A549 (cell line): ENCODE measurements at regions of chr15 and their contacts with region 1.

Region 1: DNA sequence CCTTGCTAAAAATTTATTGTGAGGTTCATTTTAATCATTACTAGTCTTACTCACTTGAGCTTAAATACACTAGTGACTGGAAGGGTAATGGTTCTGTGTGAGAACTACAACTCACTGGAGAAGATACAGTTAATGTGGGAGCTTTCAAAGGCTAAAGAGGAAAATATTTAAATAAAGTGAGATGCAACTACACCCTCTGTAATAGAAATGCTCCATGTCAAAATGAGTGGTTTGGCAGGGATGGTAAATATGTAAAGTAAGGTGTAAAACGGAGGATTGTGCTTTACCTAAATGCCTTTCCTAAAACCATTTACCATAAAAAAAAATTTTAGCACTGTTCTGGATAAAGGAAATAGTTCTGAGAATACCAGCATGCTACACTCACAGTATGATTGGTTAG is 15.3 kb downstream of the LRRC57 start:
- DNase-seq: no peak
- ATAC-seq: no peak
- H3K4me3 ChIP-seq: no peak overlapping the region
- H3K27ac ChIP-seq: no peak overlapping the region
- H3K4me1 ChIP-seq: no peaks in the 10 kb centered on the region
- CTCF ChIP-seq: no peak
- EP300 ChIP-seq: no peak
- POLR2A ChIP-seq: no peak
- RAD21 ChIP-seq: no peak

Region 2: DNA sequence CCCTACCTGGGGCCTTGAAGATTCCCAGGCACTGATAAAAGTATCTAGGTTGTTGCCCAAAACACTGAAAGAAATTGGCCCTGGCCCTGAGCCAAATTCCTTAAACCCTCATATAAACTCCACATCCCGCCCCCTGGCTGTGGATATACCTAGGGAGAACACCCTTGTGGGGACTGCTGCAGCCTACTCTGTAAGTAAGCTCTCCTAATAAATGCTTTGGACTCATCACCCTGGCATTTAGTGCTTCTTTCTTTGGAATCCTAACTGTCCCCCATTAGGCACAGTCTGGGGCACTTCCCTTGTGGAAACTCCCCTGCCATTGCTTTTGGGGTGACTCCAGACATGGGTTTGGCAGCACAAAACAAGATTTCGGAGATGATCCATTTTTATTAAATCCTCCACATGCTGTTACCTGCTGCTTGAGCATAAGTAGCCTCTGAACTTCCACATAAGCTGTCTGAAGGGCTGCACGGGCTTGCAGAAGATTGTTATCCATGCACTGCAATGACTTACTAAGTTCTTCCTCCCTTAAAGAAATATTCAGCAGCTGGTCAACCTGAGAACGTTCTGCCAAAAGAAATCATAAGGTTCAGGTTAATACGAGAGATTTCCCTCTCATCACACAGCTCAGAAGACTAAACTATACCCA is 88.7 kb before region 1 on chr15:
- CTCF ChIA-PET with region 1: no interaction called
- POLR2A ChIA-PET with region 1: no interaction called
- DNase-seq: no peak
- ATAC-seq: no peak
- H3K4me3 ChIP-seq: no peak overlapping the region
- H3K27ac ChIP-seq: no peak overlapping the region
- H3K4me1 ChIP-seq: no peaks in the 10 kb centered on the region
- CTCF ChIP-seq: no peak
- EP300 ChIP-seq: no peak
- POLR2A ChIP-seq: no peak
- RAD21 ChIP-seq: no peak

Region 3: DNA sequence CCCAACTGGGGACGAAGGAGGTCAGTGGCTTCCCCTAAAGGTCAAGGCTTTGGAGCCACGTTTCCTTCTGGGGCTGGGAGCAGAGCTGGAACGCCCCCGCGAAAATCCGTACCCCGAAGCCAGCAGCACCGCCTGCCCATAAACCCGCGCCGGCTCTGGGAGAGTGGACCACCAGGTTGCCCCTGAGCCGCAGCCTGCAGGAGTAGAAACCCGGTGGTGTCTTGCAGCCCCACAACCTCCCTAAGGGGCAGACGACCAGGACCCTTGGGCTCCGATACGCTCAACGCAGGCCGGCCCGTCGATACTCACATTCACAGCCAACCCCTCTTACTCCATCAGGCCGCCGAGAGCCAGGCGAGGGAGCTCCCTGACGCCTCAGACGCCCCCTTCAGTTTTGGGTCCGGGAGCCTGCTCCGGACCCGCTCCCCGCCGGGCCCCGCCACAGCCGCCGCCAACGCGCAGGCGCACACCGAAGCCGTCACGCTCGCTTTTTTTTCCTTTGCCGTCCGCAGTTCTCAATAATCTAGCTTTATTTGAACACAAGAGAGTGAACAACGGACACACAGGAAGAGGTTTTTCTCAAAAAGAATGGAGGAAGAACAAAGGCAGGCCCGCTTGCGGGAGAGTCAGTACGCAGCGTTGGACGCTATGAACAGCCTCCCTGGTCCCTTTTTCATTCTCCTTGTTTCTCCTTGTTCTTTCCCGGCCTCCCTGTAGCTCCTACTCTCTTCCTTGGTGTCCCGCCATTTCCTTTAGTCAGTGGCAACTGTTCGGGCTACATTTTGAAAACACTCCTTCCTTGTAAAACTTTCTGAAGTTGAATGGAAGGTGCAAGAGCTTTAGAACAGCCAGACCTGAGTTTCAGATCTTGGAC is 42.3 kb before region 1 on chr15 and contains the start of gene ZNF106:
- CTCF ChIA-PET with region 1: no interaction called
- POLR2A ChIA-PET with region 1: interaction called, 12 read pairs
- DNase-seq: peak; percentile 54 to 85
- ATAC-seq: peak; percentile 58 to 73
- H3K4me3 ChIP-seq: peak within 1 kb of the TSS; percentile 99
- H3K27ac ChIP-seq: peak within 1 kb of the TSS; percentile 93 to 98
- H3K4me1 ChIP-seq: peaks cover 15% of the 10 kb centered on the region
- CTCF ChIP-seq: no peak
- EP300 ChIP-seq: no peak
- POLR2A ChIP-seq: peak; percentile 74
- RAD21 ChIP-seq: no peak
- polyA plus RNA-seq, gene ZNF106: 19.3 and 19.4 TPM in 2 replicates